Dendritic cell treated with granulocyte-macrophage colony-stimulating factor and Interleukin-4, amounts not matched to agents 40 ng/mL and 50 ng/mL, for 4 days (primary cell): ENCODE measurements at regions of chr1 and their contacts with region 1.

Region 1: DNA sequence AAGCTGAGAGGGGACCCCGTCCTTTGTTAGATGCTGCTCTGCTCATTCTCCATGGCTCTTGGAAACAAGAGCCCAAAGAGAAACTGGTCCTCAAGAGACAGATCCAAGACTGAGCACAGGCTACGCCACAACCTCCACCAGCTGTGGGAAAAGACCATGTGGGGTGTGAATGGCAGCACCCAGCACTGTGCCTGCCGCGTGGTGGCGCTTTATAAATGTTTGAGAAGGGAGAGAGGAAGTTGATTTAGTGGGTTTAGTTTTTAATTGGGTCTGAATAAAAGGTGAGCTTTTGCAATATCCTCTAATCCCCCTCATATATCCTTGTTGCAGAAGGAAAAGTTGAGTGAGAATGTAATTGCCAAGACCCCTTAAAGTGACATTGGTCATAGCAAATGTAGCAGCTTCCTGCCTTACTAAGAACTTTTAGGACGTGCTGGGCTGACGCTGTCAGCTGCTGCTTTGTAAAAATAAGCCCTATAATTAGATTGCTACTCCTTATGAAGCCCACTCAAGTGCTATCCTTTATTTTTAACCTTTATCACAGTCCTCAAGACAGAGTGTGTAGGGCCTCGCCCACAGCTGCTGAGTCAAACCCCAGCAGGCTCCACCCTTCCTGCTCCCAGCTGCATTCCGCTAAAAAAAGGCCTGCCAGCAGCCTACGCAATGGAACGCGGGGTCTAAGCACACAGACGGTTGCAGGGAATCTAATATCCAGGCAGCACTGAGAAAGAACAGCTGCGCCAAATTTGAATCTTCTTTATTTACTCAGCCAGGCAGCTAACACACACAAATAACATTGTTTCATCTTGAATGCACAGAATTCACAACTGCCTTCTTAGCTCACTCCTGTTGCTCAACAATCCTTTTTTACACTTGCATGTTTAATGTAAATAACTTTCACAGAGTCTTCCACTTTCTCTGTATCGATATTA is 47.4 kb upstream of the PRDX6 start:
- H3K4me3 Mint-ChIP-seq: peak overlapping the region; percentile 37
- H3K27ac Mint-ChIP-seq: peak overlapping the region; percentile 91
- H3K4me1 Mint-ChIP-seq: peaks cover 41% of the 10 kb centered on the region
- H3K27me3 Mint-ChIP-seq: no peaks in the 10 kb centered on the region

Region 2: GRCh38 chr1:173341307-173341706 is 88.4 kb before region 1 on chr1:
- intact Hi-C with region 1: no loop called
- H3K4me3 Mint-ChIP-seq: no peak overlapping the region
- H3K27ac Mint-ChIP-seq: no peak overlapping the region
- H3K4me1 Mint-ChIP-seq: no peaks in the 10 kb centered on the region
- H3K27me3 Mint-ChIP-seq: no peaks in the 10 kb centered on the region

Region 3: DNA sequence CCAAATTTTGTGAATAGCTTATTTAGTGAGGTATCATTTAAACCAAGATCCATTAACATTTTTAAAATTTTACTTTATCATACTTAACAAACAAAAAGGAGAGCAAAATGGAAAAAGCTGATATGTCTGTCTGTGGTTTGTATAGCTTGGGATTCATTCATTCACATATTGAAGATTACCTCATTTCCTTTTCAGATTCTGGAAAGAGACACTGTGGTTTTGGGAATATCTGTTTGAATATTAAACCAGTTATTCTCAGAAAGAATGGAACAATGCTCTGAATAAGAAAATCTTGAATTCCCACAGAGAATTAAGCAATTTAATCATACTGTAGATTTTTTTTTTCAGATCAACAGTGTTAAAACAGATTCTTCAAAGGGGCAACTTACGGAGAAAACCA is 46.4 kb before region 1 on chr1:
- intact Hi-C with region 1: no loop called
- H3K4me3 Mint-ChIP-seq: no peak overlapping the region
- H3K27ac Mint-ChIP-seq: no peak overlapping the region
- H3K4me1 Mint-ChIP-seq: no peaks in the 10 kb centered on the region
- H3K27me3 Mint-ChIP-seq: no peaks in the 10 kb centered on the region

Region 4: GRCh38 chr1:173476664-173477285 is 47.0 kb after region 1 on chr1:
- intact Hi-C with region 1: loop called (anchors 2 kb)
- H3K4me3 Mint-ChIP-seq: peak overlapping the region; percentile 87
- H3K27ac Mint-ChIP-seq: peak overlapping the region; percentile 96
- H3K4me1 Mint-ChIP-seq: peaks cover 53% of the 10 kb centered on the region
- H3K27me3 Mint-ChIP-seq: no peaks in the 10 kb centered on the region

Region 5: GRCh38 chr1:173714759-173715537 is 285.2 kb after region 1 on chr1 and contains the start of gene KLHL20:
- intact Hi-C with region 1: loop called (anchors 5 kb)
- H3K4me3 Mint-ChIP-seq: peak within 1 kb of the TSS; percentile 98
- H3K27ac Mint-ChIP-seq: peak within 1 kb of the TSS; percentile 96
- H3K4me1 Mint-ChIP-seq: peaks cover 6% of the 10 kb centered on the region
- H3K27me3 Mint-ChIP-seq: peaks cover 20% of the 10 kb centered on the region